Activated CD4-positive, alpha-beta T cell treated with anti-CD3 and anti-CD28 coated beads, Interleukin-2, amount 10 ng/mL, durations not matched to agents 24 days and 14 days (primary cell): ENCODE measurements at regions of chr1 and their contacts with region 1.

Region 1: GRCh38 chr1:235246022-235246991 is 81.7 kb downstream of the ARID4B start:
- DNase-seq: no peak
- H3K4me3 Mint-ChIP-seq: peak overlapping the region; percentile 34
- H3K27ac Mint-ChIP-seq: peak overlapping the region; percentile 64
- H3K4me1 Mint-ChIP-seq: peaks cover 35% of the 10 kb centered on the region
- H3K27me3 Mint-ChIP-seq: no peaks in the 10 kb centered on the region

Region 2: DNA sequence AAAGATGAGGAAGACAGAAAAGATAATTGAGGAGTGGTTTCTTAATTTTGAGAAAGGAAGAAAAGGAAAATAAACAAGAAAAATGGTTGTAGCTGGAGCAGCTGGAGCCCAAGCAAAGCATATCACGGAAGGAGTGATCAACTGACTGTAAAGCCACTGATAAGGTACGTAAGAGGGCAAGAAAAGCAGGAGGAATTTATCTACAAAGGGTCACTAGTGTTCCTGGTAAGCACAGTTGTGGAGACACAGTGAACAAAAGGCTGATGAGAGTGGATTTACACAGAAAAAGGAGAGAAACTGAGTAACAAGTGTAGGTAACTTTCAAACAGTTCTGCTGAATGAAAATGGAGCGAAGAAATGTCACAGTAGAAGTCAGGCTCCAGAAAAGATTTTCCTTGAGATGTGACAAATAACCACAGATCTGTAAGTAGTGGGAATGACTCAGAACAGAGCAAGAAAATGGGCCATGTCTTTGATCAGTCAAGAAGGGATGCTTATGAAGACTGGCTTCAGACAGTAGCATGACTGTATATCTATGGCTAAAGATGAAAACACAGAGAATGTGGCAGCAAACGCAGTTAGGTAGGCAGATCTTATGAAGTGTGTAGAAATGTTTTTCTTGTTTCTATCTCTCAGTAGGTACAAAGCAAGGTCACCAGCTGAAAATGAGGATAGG is 39.6 kb before region 1 on chr1:
- intact Hi-C with region 1: loop called (anchors 2 kb)
- DNase-seq: peak; percentile 68
- H3K4me3 Mint-ChIP-seq: peak overlapping the region; percentile 29
- H3K27ac Mint-ChIP-seq: peak overlapping the region; percentile 89
- H3K4me1 Mint-ChIP-seq: peaks cover 19% of the 10 kb centered on the region
- H3K27me3 Mint-ChIP-seq: no peaks in the 10 kb centered on the region

Region 3: GRCh38 chr1:235286667-235287066 is 40.4 kb after region 1 on chr1:
- intact Hi-C with region 1: no loop called
- DNase-seq: no peak
- H3K4me3 Mint-ChIP-seq: no peak overlapping the region
- H3K27ac Mint-ChIP-seq: no peak overlapping the region
- H3K4me1 Mint-ChIP-seq: peaks cover 29% of the 10 kb centered on the region
- H3K27me3 Mint-ChIP-seq: no peaks in the 10 kb centered on the region

Region 4: DNA sequence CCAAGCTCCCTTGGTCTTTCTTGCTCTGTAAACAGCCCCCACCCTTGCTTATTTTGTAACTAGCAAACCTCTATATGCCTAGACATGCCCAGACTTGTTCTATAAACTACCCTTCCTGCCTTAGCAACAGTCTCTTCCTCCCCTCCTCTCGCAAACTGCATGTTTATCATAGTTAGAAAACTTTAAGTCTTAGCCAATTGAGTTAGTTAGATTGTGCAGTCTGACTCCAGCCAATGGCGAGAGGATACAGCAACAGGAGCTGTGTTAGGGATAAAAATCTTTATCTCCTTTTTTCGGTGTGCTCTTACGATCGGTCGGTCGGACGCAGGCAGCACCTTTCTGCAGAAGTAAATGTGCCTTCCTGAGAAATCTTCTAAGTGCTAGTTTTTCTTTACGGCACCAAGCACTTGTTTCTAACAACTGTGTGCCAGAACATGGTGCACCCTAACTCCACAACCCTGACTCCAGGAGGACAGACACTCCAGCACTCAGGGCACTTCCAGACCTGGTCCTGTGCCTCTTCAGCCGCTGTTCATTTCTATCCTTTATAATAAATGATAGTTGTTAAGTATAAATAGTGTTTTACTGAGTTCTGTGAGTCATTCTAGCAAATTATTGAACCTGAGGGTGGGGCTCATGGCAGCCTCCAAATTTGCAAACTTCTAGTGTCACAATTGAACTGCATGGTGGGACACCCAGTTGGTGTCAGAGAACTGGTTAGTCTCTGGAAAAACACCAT is 429.0 kb after region 1 on chr1:
- intact Hi-C with region 1: no loop called
- DNase-seq: no peak
- H3K4me3 Mint-ChIP-seq: no peak overlapping the region
- H3K27ac Mint-ChIP-seq: peak overlapping the region; percentile 71
- H3K4me1 Mint-ChIP-seq: peaks cover 2% of the 10 kb centered on the region
- H3K27me3 Mint-ChIP-seq: no peaks in the 10 kb centered on the region